ENCODE measurements at regions of chr1 and their contacts with region 1.

Region 1: DNA sequence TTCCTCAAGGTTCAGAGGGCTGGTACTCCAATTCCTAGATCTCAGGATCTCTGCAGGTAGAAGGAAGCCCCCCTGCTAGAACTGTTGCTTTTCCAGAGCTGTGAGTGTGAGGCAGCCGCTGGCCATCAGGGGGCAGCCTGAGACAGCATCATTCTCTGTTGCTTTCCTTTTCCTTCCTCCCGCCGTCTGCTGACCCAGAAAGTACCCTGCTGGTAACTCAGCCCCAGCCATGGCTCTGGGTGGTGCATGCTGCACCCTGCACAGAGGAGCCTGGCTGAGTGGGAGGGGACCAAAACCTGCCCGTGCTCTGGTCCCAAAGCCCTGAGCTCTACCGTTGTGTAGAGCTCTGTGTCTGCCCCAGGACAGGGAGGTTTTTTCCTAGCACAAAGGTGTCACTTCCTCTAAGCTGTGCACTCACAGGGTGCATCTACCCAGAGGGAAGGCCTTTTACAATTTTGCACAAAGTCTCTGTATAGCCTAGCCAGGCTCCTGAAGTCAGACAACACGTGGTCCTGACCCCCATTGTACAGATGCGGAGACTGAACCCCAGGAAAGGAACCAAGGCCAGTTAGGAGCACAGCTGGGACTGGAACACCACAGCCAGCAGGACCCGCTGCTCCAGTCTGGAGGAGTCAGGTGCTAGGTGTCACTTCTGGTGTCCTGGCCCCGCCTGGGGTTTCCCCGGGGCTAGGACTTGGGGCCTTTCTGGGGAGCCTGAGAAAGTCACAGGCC is 5.6 kb upstream of the FAM131C start:
- DNase-seq: peak; percentile 42 to 87 (median 70)
- ATAC-seq: peak; percentile 75
- H3K4me3 ChIP-seq: peak overlapping the region; percentile 38
- H3K4me3 Mint-ChIP-seq: peak overlapping the region; percentile 87
- H3K27ac ChIP-seq: no peak overlapping the region
- H3K27ac Mint-ChIP-seq: no peak overlapping the region
- H3K4me1 ChIP-seq: peaks cover 13% of the 10 kb centered on the region
- H3K4me1 Mint-ChIP-seq: peaks cover 5% of the 10 kb centered on the region
- H3K27me3 ChIP-seq: peaks cover under 1 to 1% of the 10 kb centered on the region in 2 experiments
- H3K27me3 Mint-ChIP-seq: peaks cover 14% of the 10 kb centered on the region
- CTCF ChIP-seq: peak; percentile 75

Region 2: GRCh38 chr1:16187748-16188401 is 108.8 kb after region 1 on chr1:
- CTCF ChIA-PET with region 1: interaction called, 66 read pairs
- POLR2A ChIA-PET with region 1: interaction called, 4 read pairs
- intact Hi-C with region 1: loop called (anchors 1 kb)
- DNase-seq: peak; percentile 57 to 88 (median 75)
- ATAC-seq: peak; percentile 91
- H3K4me3 ChIP-seq: no peak overlapping the region
- H3K4me3 Mint-ChIP-seq: no peak overlapping the region
- H3K27ac ChIP-seq: no peak overlapping the region
- H3K27ac Mint-ChIP-seq: no peak overlapping the region
- H3K4me1 ChIP-seq: peaks cover 7% of the 10 kb centered on the region
- H3K4me1 Mint-ChIP-seq: no peaks in the 10 kb centered on the region
- H3K27me3 ChIP-seq: peaks cover 0 to 4% of the 10 kb centered on the region in 2 experiments
- H3K27me3 Mint-ChIP-seq: peaks cover 10% of the 10 kb centered on the region
- CTCF ChIP-seq: peak; percentile 97